ENCODE measurements at regions of chr6 and their contacts with region 1.

Region 1: DNA sequence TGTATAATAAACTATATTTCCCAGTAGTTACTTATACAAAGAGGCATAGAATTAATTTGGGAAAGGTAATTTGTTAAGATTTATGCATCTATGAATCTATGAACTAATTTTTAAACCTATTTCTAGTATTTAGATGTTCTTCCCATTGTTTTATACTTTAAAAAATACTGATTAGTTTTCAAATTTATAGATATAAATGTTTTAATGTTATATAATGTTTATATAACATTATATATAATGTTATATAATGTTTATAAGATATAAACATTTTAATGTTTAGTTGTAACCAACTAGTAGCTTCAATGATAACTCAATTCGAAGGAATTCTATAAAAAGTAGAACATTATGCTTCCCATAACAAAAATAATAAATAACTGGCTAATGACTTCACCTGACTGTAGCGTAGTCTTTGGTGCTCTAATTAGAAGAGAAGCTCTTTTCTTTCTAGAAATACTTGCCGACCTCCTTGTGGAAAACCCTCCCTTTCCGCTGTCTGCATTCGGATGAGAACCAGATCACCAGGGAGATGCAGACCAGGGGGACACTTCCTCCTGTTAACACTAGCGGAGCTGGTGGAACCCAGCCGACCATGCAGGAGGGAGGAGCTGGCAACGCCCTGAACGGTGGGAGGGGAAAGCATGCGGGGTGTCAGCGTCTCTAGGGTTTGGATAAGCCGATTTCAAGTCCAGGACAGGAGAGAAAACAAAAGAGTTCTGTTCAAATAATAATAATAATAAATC is 158.4 kb downstream of the OR2B2 start:
- DNase-seq: peak; percentile 24 to 79 (median 64)
- ATAC-seq: no peak
- H3K4me3 ChIP-seq: peak overlapping the region; percentile 69 to 84
- H3K4me3 Mint-ChIP-seq: peak overlapping the region; percentile 86
- H3K27ac ChIP-seq: peak overlapping the region in 1 of 2 experiments; percentile 25
- H3K27ac Mint-ChIP-seq: peak overlapping the region; percentile 86
- H3K4me1 ChIP-seq: peaks cover 12% of the 10 kb centered on the region
- H3K4me1 Mint-ChIP-seq: peaks cover 34% of the 10 kb centered on the region
- H3K27me3 ChIP-seq: peaks cover 0 to 2% of the 10 kb centered on the region in 2 experiments
- H3K27me3 Mint-ChIP-seq: no peaks in the 10 kb centered on the region
- CTCF ChIP-seq: no peak

Region 2: GRCh38 chr6:26322645-26323482 is 1431.0 kb before region 1 on chr6:
- CTCF ChIA-PET with region 1: no interaction called
- POLR2A ChIA-PET with region 1: no interaction called
- intact Hi-C with region 1: loop called in 1 of 2 experiments (anchors 5 kb)
- DNase-seq: peak in 8 of 9 experiments; percentile 32 to 86 (median 58)
- ATAC-seq: peak; percentile 65
- H3K4me3 ChIP-seq: peak overlapping the region; percentile 55 to 64
- H3K4me3 Mint-ChIP-seq: peak overlapping the region; percentile 88
- H3K27ac ChIP-seq: no peak overlapping the region
- H3K27ac Mint-ChIP-seq: peak overlapping the region; percentile 90
- H3K4me1 ChIP-seq: peaks cover 5% of the 10 kb centered on the region
- H3K4me1 Mint-ChIP-seq: peaks cover 24% of the 10 kb centered on the region
- H3K27me3 ChIP-seq: peaks cover 0 to 2% of the 10 kb centered on the region in 2 experiments
- H3K27me3 Mint-ChIP-seq: peaks cover 15% of the 10 kb centered on the region
- CTCF ChIP-seq: no peak

Region 3: GRCh38 chr6:27177485-27178406 is 576.1 kb before region 1 on chr6:
- CTCF ChIA-PET with region 1: interaction called, 16 read pairs
- POLR2A ChIA-PET with region 1: interaction called, 4 read pairs
- intact Hi-C with region 1: loop called (anchors 1 kb)
- DNase-seq: peak; percentile 46 to 89 (median 72)
- ATAC-seq: peak; percentile 69
- H3K4me3 ChIP-seq: peak overlapping the region; percentile 95 to 100
- H3K4me3 Mint-ChIP-seq: peak overlapping the region; percentile 93
- H3K27ac ChIP-seq: peak overlapping the region; percentile 48 to 68
- H3K27ac Mint-ChIP-seq: peak overlapping the region; percentile 91
- H3K4me1 ChIP-seq: no peaks in the 10 kb centered on the region
- H3K4me1 Mint-ChIP-seq: peaks cover 17% of the 10 kb centered on the region
- H3K27me3 ChIP-seq: no peaks in the 10 kb centered on the region
- H3K27me3 Mint-ChIP-seq: peaks cover 3% of the 10 kb centered on the region
- CTCF ChIP-seq: peak; percentile 11

Region 4: DNA sequence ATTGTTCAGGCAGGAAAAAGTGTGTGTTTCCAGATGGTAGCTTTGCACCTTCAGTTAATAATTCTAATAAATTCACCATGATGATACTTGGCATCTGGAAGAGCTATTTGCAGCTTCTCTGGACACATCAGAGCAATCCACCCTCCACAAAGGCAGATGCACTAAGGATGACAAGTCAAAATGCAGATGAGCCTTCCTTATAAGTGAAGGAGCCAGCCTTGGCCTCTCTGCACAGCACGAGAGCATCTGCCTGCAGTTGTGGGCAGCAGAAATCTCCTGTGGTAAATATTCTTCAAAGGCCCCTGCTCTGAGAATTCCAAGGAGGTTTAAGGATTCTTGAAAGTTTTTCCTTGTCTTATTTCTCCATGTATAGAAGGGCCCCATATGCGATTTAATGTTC is 434.9 kb before region 1 on chr6:
- CTCF ChIA-PET with region 1: no interaction called
- POLR2A ChIA-PET with region 1: no interaction called
- intact Hi-C with region 1: no loop called
- DNase-seq: no peak
- ATAC-seq: no peak
- H3K4me3 ChIP-seq: no peak overlapping the region
- H3K4me3 Mint-ChIP-seq: no peak overlapping the region
- H3K27ac ChIP-seq: no peak overlapping the region
- H3K27ac Mint-ChIP-seq: no peak overlapping the region
- H3K4me1 ChIP-seq: no peaks in the 10 kb centered on the region
- H3K4me1 Mint-ChIP-seq: no peaks in the 10 kb centered on the region
- H3K27me3 ChIP-seq: peaks cover 0 to 8% of the 10 kb centered on the region in 2 experiments
- H3K27me3 Mint-ChIP-seq: peaks cover 40% of the 10 kb centered on the region
- CTCF ChIP-seq: no peak

Region 5: GRCh38 chr6:27388293-27389197 is 365.3 kb before region 1 on chr6 and contains the start of gene ZNF391:
- CTCF ChIA-PET with region 1: no interaction called
- POLR2A ChIA-PET with region 1: no interaction called
- intact Hi-C with region 1: loop called in 1 of 2 experiments (anchors 2 kb)
- DNase-seq: peak; percentile 41 to 86 (median 67)
- ATAC-seq: peak; percentile 90
- H3K4me3 ChIP-seq: peak within 1 kb of the TSS; percentile 66 to 72
- H3K4me3 Mint-ChIP-seq: peak within 1 kb of the TSS; percentile 98
- H3K27ac ChIP-seq: peak within 1 kb of the TSS; percentile 45 to 55
- H3K27ac Mint-ChIP-seq: peak within 1 kb of the TSS; percentile 94
- H3K4me1 ChIP-seq: peaks cover 9% of the 10 kb centered on the region
- H3K4me1 Mint-ChIP-seq: peaks cover 15% of the 10 kb centered on the region
- H3K27me3 ChIP-seq: no peaks in the 10 kb centered on the region
- H3K27me3 Mint-ChIP-seq: no peaks in the 10 kb centered on the region
- CTCF ChIP-seq: no peak
- total RNA-seq, gene ZNF391: 0.72 to 1.1 TPM

Region 6: DNA sequence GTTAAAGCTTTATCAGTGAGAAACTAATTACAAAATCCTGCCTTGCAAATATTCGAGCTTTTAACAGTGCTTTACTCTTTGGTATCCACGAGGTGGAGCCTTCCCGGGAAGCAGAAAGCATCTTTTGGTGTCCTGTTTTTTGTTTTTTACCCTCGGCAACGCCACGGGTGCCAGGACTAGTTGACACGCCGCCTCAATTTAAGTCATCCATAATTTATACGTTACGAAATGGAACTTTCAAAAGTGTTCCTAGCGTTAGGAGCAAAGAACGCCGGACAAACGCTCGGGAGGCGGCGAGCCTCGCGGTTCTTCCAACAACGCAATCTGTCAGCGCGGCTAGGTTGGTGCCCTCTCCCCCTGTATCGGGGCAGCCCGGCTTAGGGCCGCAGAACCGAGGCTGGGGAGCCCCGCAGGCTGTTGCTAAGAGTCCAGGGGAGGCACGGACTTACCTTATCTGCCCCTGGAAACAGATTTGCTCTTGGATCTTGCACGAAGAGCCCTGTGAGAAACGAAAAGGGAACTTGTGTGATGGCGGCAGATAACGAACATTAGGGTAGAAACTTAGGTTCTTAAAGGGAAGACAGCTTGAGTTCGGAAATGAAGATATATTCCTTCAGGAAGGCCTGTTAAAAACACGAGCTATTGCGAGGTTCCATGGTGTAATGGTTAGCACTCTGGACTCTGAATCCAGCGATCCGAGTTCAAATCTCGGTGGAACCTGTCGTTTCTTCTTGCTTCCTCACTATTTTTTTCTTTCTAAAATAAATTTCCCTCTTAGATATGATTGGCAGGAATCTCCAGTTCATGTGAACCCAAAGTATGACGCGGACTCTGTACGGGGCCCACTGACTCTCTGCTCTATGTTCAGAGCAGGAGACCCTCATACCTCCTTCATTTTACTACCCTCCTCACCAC is 234.7 kb before region 1 on chr6:
- CTCF ChIA-PET with region 1: interaction called, 27 read pairs
- POLR2A ChIA-PET with region 1: interaction called, 9 read pairs
- intact Hi-C with region 1: loop called (anchors 1 kb)
- DNase-seq: peak; percentile 29 to 88 (median 61)
- ATAC-seq: peak; percentile 78
- H3K4me3 ChIP-seq: peak overlapping the region; percentile 74 to 88
- H3K4me3 Mint-ChIP-seq: peak overlapping the region; percentile 83
- H3K27ac ChIP-seq: peak overlapping the region; percentile 59 to 72
- H3K27ac Mint-ChIP-seq: peak overlapping the region; percentile 83
- H3K4me1 ChIP-seq: peaks cover 10% of the 10 kb centered on the region
- H3K4me1 Mint-ChIP-seq: peaks cover 19% of the 10 kb centered on the region
- H3K27me3 ChIP-seq: peaks cover 0 to 9% of the 10 kb centered on the region in 2 experiments
- H3K27me3 Mint-ChIP-seq: peaks cover 18% of the 10 kb centered on the region
- CTCF ChIP-seq: peak; percentile 77

Region 7: GRCh38 chr6:27772261-27773001 is 18.6 kb after region 1 on chr6:
- CTCF ChIA-PET with region 1: interaction called, 38 read pairs
- POLR2A ChIA-PET with region 1: interaction called, 4 read pairs
- intact Hi-C with region 1: no loop called
- DNase-seq: peak; percentile 76 to 92 (median 84)
- ATAC-seq: peak; percentile 96
- H3K4me3 ChIP-seq: no peak overlapping the region
- H3K4me3 Mint-ChIP-seq: no peak overlapping the region
- H3K27ac ChIP-seq: peak overlapping the region in 1 of 2 experiments; percentile 8
- H3K27ac Mint-ChIP-seq: peak overlapping the region; percentile 56
- H3K4me1 ChIP-seq: peaks cover 11% of the 10 kb centered on the region
- H3K4me1 Mint-ChIP-seq: peaks cover 11% of the 10 kb centered on the region
- H3K27me3 ChIP-seq: no peaks in the 10 kb centered on the region
- H3K27me3 Mint-ChIP-seq: peaks cover 11% of the 10 kb centered on the region
- CTCF ChIP-seq: peak; percentile 85

Region 8: GRCh38 chr6:27816906-27817305 is 63.1 kb after region 1 on chr6:
- CTCF ChIA-PET with region 1: no interaction called
- POLR2A ChIA-PET with region 1: no interaction called
- intact Hi-C with region 1: no loop called
- DNase-seq: no peak
- ATAC-seq: no peak
- H3K4me3 ChIP-seq: no peak overlapping the region
- H3K4me3 Mint-ChIP-seq: no peak overlapping the region
- H3K27ac ChIP-seq: no peak overlapping the region
- H3K27ac Mint-ChIP-seq: no peak overlapping the region
- H3K4me1 ChIP-seq: peaks cover 6% of the 10 kb centered on the region
- H3K4me1 Mint-ChIP-seq: peaks cover 15% of the 10 kb centered on the region
- H3K27me3 ChIP-seq: no peaks in the 10 kb centered on the region
- H3K27me3 Mint-ChIP-seq: no peaks in the 10 kb centered on the region
- CTCF ChIP-seq: no peak

Region 9: DNA sequence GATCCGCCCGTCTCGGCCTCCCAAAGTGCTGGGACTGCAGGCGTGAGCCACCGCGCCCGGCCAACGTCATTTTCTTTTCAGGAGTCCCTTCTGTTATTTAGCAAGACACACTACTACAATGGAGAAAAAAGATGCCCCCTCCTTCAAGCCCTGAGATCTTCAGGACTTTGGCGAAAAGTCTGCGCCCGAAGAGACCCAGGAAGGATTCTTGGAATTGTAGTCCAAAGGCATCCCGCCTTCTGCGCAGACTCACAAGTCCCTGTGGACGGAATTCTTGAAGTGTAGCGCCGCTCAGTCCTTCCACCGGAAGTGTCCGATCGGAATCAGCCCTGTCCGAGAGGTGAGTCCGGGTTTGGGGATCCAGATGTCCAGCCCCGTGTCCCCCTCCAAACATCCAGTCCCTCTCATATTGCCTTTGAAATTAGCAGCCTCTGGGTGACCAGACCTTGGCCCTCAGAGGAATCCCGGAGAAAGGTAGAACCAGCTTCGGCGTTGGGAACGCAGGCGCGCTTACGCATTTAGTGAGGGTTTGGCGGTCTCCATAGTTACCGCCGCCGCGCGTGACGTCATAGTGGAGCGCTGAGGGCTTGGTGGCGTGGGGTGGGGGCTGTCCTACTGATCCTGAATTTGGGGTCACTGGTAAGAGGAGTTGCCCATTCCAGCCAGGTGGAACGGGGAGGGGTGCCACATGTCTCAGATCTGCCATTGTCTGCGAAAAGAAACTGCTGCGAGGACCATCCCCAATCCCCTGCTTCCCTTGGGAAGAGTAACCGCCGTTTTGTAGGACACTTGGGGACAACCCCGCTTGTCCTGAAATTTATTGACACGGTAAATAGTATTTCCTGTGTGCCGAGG is 327.0 kb after region 1 on chr6:
- CTCF ChIA-PET with region 1: no interaction called
- POLR2A ChIA-PET with region 1: no interaction called
- intact Hi-C with region 1: loop called in 1 of 2 experiments (anchors 10 kb)
- DNase-seq: peak; percentile 86 to 96 (median 94)
- ATAC-seq: peak; percentile 74
- H3K4me3 ChIP-seq: peak overlapping the region; percentile 69 to 93
- H3K4me3 Mint-ChIP-seq: peak overlapping the region; percentile 98
- H3K27ac ChIP-seq: peak overlapping the region; percentile 91 to 96
- H3K27ac Mint-ChIP-seq: peak overlapping the region; percentile 99
- H3K4me1 ChIP-seq: peaks cover 13% of the 10 kb centered on the region
- H3K4me1 Mint-ChIP-seq: peaks cover 21% of the 10 kb centered on the region
- H3K27me3 ChIP-seq: no peaks in the 10 kb centered on the region
- H3K27me3 Mint-ChIP-seq: no peaks in the 10 kb centered on the region
- CTCF ChIP-seq: no peak